ENCODE measurements at regions of chr14 and their contacts with region 1.

Region 1: DNA sequence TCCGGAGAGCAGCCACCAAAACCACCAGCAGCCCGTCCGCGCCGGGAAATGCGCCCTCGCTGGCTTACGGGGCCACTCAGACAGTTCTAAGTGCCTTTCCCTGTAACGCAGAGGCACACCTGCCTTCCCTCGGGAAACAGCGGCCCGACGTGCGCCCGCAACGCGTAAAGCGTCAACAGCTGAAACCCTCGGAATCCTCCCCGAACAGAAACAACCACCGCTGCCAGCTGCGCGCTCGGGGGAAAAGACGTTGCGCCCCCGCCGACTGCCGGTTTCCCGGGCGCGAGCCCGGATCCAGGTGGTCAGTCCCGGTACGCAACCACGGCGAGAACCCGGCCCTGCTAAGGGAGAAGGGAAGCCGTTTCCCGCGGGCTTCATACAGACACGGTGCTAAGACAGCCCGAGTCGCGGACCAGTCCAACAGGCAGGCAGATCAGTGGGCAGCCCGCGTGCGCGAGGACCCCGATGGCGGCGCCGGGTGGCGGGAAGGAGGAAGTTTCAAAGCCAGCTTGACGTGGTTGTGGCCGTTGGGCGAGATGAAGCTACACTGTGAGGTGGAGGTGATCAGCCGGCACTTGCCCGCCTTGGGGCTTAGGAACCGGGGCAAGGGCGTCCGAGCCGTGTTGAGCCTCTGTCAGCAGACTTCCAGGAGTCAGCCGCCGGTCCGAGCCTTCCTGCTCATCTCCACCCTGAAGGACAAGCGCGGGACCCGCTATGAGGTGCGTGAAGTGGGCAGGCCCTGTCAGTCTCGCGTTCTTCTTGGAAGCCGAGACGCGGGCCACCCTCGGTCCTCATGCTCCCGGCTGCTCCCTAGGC is at the start of gene LRR1:
- DNase-seq: peak; percentile 76
- ATAC-seq: peak; percentile 76
- H3K4me3 ChIP-seq: peak within 1 kb of the TSS; percentile 79 to 91 (median 83)
- H3K27ac ChIP-seq: peak within 1 kb of the TSS; percentile 97
- H3K4me1 ChIP-seq: peaks cover 39% of the 10 kb centered on the region
- H3K27me3 ChIP-seq: no peaks in the 10 kb centered on the region; a peak in 1 of 5 replicates
- CTCF ChIP-seq: 0 out of 2 replicates have a peak, but pooled peaks have one; percentile 12
- EP300 ChIP-seq: no peak
- POLR2A ChIP-seq: peak; percentile 67 to 93
- RAD21 ChIP-seq: peak; percentile 30
- total RNA-seq, gene LRR1: 36.2 and 49.8 TPM in 2 replicates

Region 2: DNA sequence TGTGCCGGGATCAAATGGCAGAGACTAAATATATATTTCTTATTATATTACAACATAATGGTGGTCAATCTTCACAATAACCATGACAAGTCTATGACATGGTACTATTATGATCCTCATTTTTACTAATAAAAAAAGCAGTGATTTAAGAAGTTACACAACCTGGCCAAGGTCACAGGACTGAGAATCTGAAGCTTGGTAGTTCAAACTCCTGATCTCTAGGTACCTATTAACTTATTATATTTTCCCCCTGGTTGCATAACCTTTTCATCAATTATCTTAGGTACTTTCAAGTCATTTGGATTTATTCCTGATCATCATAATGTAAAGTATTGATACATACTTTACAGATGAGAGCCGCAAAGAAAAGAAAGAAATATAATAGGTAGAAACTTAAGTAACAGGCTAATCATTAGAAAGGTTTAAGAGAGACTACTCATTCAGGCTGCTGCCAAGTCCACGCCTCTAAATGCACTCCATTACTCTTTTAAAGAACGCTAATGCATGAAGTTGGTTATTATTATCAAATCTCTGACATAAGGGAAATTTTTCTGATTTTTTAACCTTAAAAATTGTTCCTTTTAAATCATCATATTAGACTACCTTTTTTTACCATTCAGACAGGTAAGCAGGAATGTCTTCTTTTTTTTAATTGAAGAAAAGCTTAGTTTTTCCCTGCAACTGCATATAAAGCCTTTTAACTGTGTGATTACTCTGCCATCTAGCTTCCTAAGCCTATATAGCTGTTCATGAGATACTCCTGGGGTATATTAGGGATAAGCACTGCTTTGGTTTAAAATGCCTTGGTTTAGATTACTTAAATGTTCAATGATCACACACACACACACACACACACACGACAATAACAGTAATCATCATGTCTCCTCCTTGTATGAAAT is 48.2 kb before region 1 on chr14:
- CTCF ChIA-PET with region 1: no interaction called
- POLR2A ChIA-PET with region 1: no interaction called
- in situ Hi-C with region 1: no loop called
- intact Hi-C with region 1: no loop called
- DNase-seq: peak; percentile 12
- ATAC-seq: peak; percentile 58
- H3K4me3 ChIP-seq: no peak overlapping the region
- H3K27ac ChIP-seq: no peak overlapping the region
- H3K4me1 ChIP-seq: peaks cover 35% of the 10 kb centered on the region
- H3K27me3 ChIP-seq: no peaks in the 10 kb centered on the region
- CTCF ChIP-seq: peak; percentile 45
- EP300 ChIP-seq: no peak
- POLR2A ChIP-seq: no peak
- RAD21 ChIP-seq: no peak

Region 3: DNA sequence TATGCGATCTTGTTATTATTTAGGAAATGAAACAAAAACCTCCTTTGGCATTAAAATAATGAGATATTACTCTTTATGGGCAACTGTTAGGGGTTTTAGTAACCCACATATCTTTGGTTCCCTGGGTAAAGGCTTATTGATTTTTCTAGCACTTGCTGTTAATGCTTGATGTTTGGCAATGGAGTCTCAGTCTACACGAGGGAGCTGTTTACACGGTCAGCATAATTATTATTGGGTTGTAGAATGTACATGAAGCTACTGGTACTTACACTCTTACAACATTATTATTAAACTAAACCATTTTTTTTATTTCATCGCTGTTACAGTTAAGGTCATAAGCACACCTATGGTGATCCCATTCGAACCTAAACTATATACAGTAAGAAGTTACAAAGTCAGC is 24.7 kb before region 1 on chr14:
- CTCF ChIA-PET with region 1: no interaction called
- POLR2A ChIA-PET with region 1: no interaction called
- in situ Hi-C with region 1: no loop called
- intact Hi-C with region 1: no loop called
- DNase-seq: no peak
- ATAC-seq: no peak
- H3K4me3 ChIP-seq: no peak overlapping the region
- H3K27ac ChIP-seq: no peak overlapping the region
- H3K4me1 ChIP-seq: peaks cover 13% of the 10 kb centered on the region
- H3K27me3 ChIP-seq: no peaks in the 10 kb centered on the region
- CTCF ChIP-seq: no peak
- EP300 ChIP-seq: no peak
- POLR2A ChIP-seq: no peak
- RAD21 ChIP-seq: no peak

Region 4: DNA sequence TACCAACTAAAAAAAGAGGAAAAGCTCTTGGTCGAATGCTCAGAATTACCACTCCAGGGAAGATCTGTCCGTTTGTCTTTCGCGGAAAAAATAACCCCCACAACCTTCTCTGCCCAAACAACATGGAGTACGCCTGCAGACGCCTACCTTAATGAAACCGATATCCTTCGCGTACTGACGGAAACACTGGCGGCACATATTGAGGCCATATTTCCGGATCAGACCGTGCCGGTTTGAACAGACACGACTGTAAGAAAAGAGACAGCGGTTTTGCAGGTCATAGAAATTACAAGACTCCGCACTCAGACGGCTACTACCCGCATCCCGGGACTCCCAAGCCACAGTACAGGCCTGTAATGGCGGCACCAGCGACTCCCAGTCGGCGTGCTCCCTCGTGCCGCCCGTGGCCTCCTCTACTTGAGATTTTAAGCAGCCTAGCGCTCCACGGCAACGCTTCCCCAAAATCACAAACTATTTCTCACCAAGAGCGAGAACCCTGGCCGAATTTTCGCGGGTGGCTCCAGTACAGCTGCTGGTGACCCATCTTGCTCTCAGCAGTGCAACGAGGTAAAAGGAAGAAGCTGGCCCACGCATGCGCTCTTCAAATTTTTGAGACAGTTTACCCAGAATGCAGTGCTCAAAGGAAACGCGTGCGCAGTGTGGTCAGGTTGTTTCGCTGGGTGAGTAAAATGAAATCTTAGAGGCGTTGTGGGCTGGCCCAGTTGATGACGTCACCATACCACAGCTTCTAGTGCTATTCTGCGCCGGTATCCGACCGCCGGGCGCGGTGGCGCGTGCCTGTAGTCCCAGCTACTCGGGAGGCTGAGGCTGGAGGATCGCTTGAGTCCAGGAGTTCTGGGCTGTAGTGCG is 12.7 kb before region 1 on chr14 and contains the start of gene RPS29:
- CTCF ChIA-PET with region 1: interaction called, 10 read pairs
- POLR2A ChIA-PET with region 1: interaction called, 97 read pairs
- in situ Hi-C with region 1: no loop called
- intact Hi-C with region 1: loop called (anchors 1 kb)
- DNase-seq: peak; percentile 99
- ATAC-seq: peak; percentile 85
- H3K4me3 ChIP-seq: peak within 1 kb of the TSS; percentile 82 to 98 (median 94)
- H3K27ac ChIP-seq: peak within 1 kb of the TSS; percentile 89
- H3K4me1 ChIP-seq: peaks cover 48% of the 10 kb centered on the region
- H3K27me3 ChIP-seq: no peaks in the 10 kb centered on the region; a peak in 1 of 5 replicates
- CTCF ChIP-seq: no peak; the same call in 1 of the 2 replicates
- EP300 ChIP-seq: 0 out of 4 replicates have a peak, but pooled peaks of 1 of the 2 experiments have one; percentile 52
- POLR2A ChIP-seq: peak; percentile 89 to 98
- RAD21 ChIP-seq: peak; percentile 17
- total RNA-seq, gene RPS29: 3,901 and 4,303 TPM in 2 replicates

Measured in HepG2 (cell line).